ENCODE measurements at regions of chr3 and their contacts with region 1.

Region 1: GRCh38 chr3:17841190-17841828 is 98.9 kb upstream of the TBC1D5 start:
- DNase-seq: peak; percentile 11 to 78 (median 61)
- ATAC-seq: peak; percentile 66 to 80 (median 72)
- H3K4me3 ChIP-seq: no peak overlapping the region
- H3K4me3 Mint-ChIP-seq: no peak overlapping the region
- H3K27ac ChIP-seq: no peak overlapping the region
- H3K27ac Mint-ChIP-seq: no peak overlapping the region
- H3K4me1 ChIP-seq: no peaks in the 10 kb centered on the region
- H3K4me1 Mint-ChIP-seq: no peaks in the 10 kb centered on the region
- H3K27me3 ChIP-seq: peaks cover 0 to 3% of the 10 kb centered on the region in 2 experiments
- H3K27me3 Mint-ChIP-seq: peaks cover 5% of the 10 kb centered on the region in 2 donors

Region 2: DNA sequence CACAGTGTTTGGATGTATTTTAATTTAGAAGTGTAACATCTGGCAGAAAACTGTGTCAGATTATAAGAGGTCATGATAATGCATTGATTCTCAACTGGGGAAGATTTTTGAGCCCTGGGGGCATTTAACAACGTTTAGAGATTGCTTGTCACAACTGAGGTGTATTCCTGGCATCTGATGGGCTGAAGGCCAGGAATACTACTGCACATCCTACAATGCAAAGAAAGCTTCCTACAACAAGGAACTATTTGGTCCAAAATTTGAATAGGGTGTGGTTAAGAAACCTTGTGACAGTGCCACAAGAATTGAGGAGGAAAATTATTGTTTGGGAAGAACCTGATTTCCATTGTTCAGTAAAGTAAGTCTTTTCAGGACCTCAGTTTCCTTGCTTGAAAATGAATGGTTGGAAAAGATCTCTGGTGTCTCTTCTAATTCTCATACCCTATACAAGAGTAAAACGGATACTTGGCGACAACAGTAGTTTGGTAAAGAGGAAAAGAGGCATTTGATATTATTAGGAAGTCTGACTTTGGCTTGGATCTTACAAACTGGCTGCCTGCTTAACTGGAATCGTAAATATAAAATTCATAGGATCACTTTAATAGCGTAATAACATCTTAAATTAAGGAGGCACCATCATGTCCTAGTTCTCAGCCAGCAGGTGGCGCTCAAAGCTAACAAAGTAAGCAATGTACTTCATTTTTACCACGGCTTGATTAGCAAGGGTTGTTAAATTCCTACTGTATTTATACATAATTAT is 1240.3 kb before region 1 on chr3:
- CTCF ChIA-PET with region 1: interaction called, 3 to 24 read pairs
- POLR2A ChIA-PET with region 1: no interaction called
- DNase-seq: peak; percentile 44 to 92 (median 77)
- ATAC-seq: peak in 3 of 4 experiments; percentile 43 to 61 (median 56)
- H3K4me3 ChIP-seq: no peak overlapping the region
- H3K4me3 Mint-ChIP-seq: no peak overlapping the region
- H3K27ac ChIP-seq: no peak overlapping the region
- H3K27ac Mint-ChIP-seq: no peak overlapping the region
- H3K4me1 ChIP-seq: peaks cover 0 to 2% of the 10 kb centered on the region in 2 experiments
- H3K4me1 Mint-ChIP-seq: peaks cover 12 to 20% (median 19%) of the 10 kb centered on the region in 3 donors
- H3K27me3 ChIP-seq: no peaks in the 10 kb centered on the region
- H3K27me3 Mint-ChIP-seq: no peaks in the 10 kb centered on the region

Region 3: DNA sequence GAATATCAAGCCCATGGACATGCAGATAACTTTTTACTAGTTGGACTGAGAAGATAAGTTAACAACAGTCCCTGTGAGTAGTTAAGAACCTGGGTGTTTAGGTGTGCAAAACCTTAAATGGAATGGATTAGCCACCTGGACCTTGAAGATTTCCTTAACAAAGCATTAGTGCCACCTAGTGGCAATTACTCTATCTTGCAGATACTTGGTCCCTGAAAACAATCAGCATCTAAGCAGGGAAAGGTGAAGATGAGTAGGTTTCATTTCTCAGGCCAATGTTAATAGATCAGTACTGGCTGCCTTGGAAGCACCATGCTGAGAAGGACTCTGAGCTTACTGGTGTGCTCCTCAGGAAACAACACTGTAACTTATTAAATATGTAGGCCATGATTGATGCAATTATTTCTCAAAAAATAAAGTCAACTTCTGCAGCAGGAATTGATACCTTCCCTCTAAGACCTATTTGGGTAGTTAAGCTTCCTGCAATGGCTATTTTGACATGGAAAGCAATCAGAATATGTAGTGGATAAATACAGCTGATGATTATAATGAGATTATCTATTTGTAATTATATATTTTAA is 428.3 kb before region 1 on chr3:
- CTCF ChIA-PET with region 1: interaction called in 1 of 2 experiments, 3 read pairs
- POLR2A ChIA-PET with region 1: interaction called in 1 of 2 experiments, 16 read pairs
- DNase-seq: peak in 5 of 35 experiments; percentile 4 to 69 (median 7)
- ATAC-seq: peak in 3 of 4 experiments; percentile 38 to 57 (median 40)
- H3K4me3 ChIP-seq: no peak overlapping the region
- H3K4me3 Mint-ChIP-seq: no peak overlapping the region
- H3K27ac ChIP-seq: no peak overlapping the region
- H3K27ac Mint-ChIP-seq: no peak overlapping the region
- H3K4me1 ChIP-seq: no peaks in the 10 kb centered on the region
- H3K4me1 Mint-ChIP-seq: peaks cover 0 to 1% (median 0%) of the 10 kb centered on the region in 3 donors
- H3K27me3 ChIP-seq: no peaks in the 10 kb centered on the region
- H3K27me3 Mint-ChIP-seq: no peaks in the 10 kb centered on the region

Region 4: GRCh38 chr3:17645072-17645698 is 196.1 kb before region 1 on chr3:
- CTCF ChIA-PET with region 1: interaction called, 13 to 31 read pairs
- POLR2A ChIA-PET with region 1: no interaction called
- DNase-seq: peak in 1 of 35 experiments; percentile 49
- ATAC-seq: no peak
- H3K4me3 ChIP-seq: no peak overlapping the region
- H3K4me3 Mint-ChIP-seq: no peak overlapping the region
- H3K27ac ChIP-seq: no peak overlapping the region
- H3K27ac Mint-ChIP-seq: no peak overlapping the region
- H3K4me1 ChIP-seq: no peaks in the 10 kb centered on the region
- H3K4me1 Mint-ChIP-seq: peaks cover 0 to 6% (median 6%) of the 10 kb centered on the region in 3 donors
- H3K27me3 ChIP-seq: no peaks in the 10 kb centered on the region
- H3K27me3 Mint-ChIP-seq: no peaks in the 10 kb centered on the region

Region 5: DNA sequence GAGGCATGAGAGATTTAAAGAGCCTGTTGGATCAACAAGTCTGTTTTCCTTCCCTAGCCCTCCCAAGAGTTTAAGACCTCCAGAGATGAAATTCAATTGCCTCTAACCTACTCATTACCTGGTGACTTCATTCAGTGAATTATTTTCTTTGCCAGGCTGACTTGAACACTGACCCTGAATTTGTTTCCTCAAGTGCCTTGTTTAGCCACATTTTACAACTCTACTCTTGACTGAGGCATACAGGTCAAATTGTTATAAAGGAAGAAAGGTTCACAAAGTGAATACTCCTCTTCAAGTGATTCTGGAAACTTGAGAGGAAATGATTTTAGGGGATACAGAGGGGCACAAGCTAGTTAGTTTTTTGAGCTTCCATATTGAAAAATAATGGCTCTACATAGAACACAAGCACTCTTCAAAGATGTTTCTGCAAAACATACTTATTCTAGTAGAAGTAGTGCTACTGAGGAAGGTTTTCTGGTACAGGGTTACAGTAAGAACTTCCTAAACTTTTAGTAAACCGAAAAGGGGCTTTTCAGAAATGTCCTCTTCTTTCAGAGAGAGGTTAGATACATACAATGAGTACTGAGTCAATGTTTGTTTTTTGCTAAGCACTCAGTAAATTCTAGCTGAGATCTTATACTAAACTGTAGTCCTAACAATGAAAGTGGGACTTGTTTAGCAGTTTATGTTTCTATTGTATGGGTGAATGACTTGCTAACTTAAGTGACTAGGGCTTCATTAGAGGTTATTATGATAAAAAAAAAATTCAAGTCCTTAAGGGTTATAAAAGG is 721.2 kb after region 1 on chr3:
- CTCF ChIA-PET with region 1: no interaction called
- POLR2A ChIA-PET with region 1: no interaction called
- DNase-seq: no peak
- ATAC-seq: no peak
- H3K4me3 ChIP-seq: no peak overlapping the region
- H3K4me3 Mint-ChIP-seq: no peak overlapping the region
- H3K27ac ChIP-seq: no peak overlapping the region
- H3K27ac Mint-ChIP-seq: no peak overlapping the region
- H3K4me1 ChIP-seq: peaks cover 9 to 28% of the 10 kb centered on the region in 2 experiments
- H3K4me1 Mint-ChIP-seq: peaks cover 43 to 51% (median 46%) of the 10 kb centered on the region in 3 donors
- H3K27me3 ChIP-seq: no peaks in the 10 kb centered on the region
- H3K27me3 Mint-ChIP-seq: no peaks in the 10 kb centered on the region